ENCODE measurements at regions of chr4 and their contacts with region 1.

Region 1: GRCh38 chr4:42282081-42282901 is 115.0 kb upstream of the SHISA3 start:
- DNase-seq: peak; percentile 76
- CTCF ChIP-seq: peak; percentile 63

Region 2: GRCh38 chr4:41957634-41958033 is 324.7 kb before region 1 on chr4:
- CTCF ChIA-PET with region 1: interaction called, 11 read pairs
- POLR2A ChIA-PET with region 1: no interaction called
- DNase-seq: peak; percentile 50
- CTCF ChIP-seq: peak; percentile 50

Region 3: GRCh38 chr4:42268824-42269223 is 13.5 kb before region 1 on chr4:
- CTCF ChIA-PET with region 1: interaction called, 11 read pairs
- POLR2A ChIA-PET with region 1: no interaction called
- DNase-seq: no peak
- CTCF ChIP-seq: no peak

Region 4: GRCh38 chr4:42296196-42296595 is 13.9 kb after region 1 on chr4:
- CTCF ChIA-PET with region 1: interaction called, 51 read pairs
- POLR2A ChIA-PET with region 1: no interaction called
- DNase-seq: no peak
- CTCF ChIP-seq: no peak

Region 5: DNA sequence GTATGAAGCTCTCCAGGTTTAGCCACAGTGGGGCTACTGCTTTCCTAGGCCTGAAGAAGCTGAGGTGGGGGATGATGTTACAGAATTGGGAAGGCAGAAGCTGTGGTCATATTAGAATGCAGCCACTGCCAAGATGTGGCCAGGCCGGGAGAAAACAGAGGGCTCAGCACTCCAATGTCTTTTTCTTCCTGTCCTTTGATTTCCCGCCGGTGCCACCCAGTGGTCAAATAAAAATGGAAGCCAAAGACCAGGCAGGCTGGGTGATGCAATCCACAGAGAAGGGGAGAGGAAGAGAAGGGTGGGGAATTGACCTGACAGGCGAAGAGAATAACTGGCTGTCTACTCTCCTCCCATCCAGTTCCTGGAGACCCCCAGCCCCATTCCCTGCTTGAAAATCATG is 20.1 kb after region 1 on chr4:
- CTCF ChIA-PET with region 1: interaction called, 51 read pairs
- POLR2A ChIA-PET with region 1: no interaction called
- DNase-seq: no peak
- CTCF ChIP-seq: no peak

Measured in GM10248 (cell line).